ENCODE measurements at regions of chr11 and their contacts with region 1.

Region 1: DNA sequence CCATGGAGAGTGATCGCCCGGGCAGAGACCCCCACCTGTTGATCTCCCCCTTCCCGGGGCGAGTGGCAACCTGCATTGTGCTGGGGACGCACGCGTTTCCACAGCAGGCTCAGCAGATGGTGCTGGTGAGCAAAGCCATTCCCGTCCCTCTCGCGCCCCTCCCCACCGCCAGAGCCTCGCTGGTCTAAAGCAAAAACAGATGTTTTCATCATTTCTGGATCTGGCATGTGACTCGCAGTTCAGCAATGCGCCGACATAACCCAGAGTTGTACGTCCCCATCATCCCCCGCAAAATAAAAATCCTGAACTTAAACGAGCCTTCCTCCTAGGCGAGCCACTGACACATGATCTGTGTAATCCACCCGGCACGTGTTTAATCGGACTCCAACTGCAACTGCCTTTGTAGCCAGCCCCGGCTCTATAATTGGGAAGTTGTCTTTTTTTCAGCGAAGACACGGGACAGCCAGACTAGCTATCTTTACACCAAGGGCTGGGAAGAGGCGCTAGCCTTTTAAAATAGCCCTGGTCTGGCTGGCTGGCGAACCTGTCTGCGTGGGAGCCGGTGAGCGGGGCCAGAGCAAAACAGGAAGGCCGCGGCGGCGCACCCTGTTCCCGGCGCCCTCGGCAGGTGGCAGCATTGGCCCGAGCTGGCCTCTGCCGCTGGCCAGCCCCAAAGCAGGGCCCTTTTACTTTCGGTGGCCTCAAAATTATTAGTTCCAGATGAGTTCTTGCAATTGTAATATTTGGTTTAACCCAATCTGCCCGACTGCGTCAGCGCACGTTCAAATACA is 203.0 kb upstream of the SORL1-AS1 start:
- DNase-seq: peak; percentile 87
- H3K4me3 ChIP-seq: peak overlapping the region; percentile 6 to 68 (median 39)
- H3K27ac ChIP-seq: peak overlapping the region; percentile 69
- H3K4me1 ChIP-seq: peaks cover 2% of the 10 kb centered on the region
- H3K27me3 ChIP-seq: peaks cover 5 to 11% of the 10 kb centered on the region in 2 experiments
- CTCF ChIP-seq: peak; percentile 84 to 98
- POLR2A ChIP-seq: no peak

Region 2: DNA sequence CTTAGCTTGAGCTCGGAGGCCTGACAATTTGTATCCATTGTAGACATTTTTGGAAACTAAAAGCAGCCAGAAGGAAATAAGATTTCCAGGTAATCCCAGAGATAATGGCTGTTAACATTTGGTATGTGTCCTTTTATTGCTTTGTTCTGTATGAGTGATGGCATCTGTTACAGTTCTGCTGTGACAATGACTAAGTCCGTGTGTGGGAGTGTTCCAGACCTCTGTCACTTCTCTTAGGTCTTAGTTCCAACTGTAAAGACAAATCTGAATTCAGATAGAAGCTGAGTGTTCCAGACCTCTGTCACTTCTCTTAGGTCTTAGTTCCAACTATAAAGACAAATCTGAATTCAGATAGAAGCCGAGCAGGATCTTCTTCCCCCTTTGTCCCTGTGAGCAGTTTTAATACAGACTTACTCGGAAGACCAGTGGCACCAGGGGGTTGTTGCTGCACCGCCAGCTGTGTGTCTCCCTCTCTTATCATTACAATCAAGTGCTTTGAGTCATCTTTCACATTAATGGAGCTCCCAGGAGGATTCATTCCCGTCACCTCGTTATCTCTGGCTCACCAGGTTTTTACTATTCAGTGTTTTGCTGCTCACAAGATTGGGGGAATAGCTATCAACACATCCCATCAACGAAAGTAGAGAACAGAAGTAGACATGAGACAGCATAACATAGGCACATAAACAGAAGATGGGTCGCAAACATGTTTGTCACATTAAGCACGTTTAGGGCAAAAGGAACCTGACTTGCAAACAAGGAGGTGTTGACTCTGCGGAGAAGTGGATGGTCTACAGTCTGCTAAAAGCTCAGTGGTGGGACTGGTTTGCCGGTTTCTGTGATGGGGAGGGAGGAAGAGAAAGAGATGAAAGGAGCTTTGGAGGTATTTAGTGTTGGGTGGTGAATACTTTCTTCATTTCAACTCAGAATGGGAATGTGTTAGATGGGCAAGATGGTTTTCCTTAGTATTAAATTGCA is 11.9 kb before region 1 on chr11:
- CTCF ChIA-PET with region 1: interaction called, 13 read pairs
- POLR2A ChIA-PET with region 1: no interaction called
- dilution Hi-C with region 1: no loop called
- intact Hi-C with region 1: no loop called
- DNase-seq: no peak
- H3K4me3 ChIP-seq: no peak overlapping the region
- H3K27ac ChIP-seq: no peak overlapping the region
- H3K4me1 ChIP-seq: no peaks in the 10 kb centered on the region
- H3K27me3 ChIP-seq: peaks cover 15 to 20% of the 10 kb centered on the region in 2 experiments
- CTCF ChIP-seq: no peak
- POLR2A ChIP-seq: no peak

Region 3: GRCh38 chr11:121754598-121754997 is 98.9 kb after region 1 on chr11:
- CTCF ChIA-PET with region 1: no interaction called
- POLR2A ChIA-PET with region 1: no interaction called
- dilution Hi-C with region 1: no loop called
- intact Hi-C with region 1: no loop called
- DNase-seq: no peak
- H3K4me3 ChIP-seq: no peak overlapping the region
- H3K27ac ChIP-seq: no peak overlapping the region
- H3K4me1 ChIP-seq: no peaks in the 10 kb centered on the region
- H3K27me3 ChIP-seq: no peaks in the 10 kb centered on the region
- CTCF ChIP-seq: no peak
- POLR2A ChIP-seq: no peak

Region 4: DNA sequence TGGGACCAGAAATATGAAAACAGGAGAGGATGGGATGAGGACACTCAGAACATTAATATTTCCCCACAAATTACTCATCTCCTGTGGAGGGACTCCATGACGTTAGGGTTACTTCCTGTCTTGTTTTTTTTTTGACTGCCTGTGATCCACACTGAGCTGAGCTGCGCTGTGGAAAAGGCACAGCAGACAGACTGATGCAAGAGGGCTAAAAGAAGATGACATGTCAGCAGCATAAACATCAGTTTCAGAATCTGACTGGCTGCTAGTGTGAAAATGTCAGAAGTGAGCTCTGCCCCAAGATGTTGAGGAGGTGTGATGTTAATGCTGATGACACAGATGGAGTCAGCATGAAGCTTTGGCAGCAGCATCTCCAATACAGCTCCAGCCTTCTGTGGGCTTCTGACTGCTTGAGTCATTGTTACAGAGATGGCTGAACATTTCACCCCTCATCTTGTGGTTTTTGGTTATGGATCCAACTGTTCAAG is 173.5 kb after region 1 on chr11:
- CTCF ChIA-PET with region 1: no interaction called
- POLR2A ChIA-PET with region 1: interaction called, 4 read pairs
- dilution Hi-C with region 1: no loop called
- intact Hi-C with region 1: loop called (anchors 5 kb)
- DNase-seq: peak; percentile 87
- H3K4me3 ChIP-seq: no peak overlapping the region
- H3K27ac ChIP-seq: peak overlapping the region; percentile 81
- H3K4me1 ChIP-seq: peaks cover 26% of the 10 kb centered on the region
- H3K27me3 ChIP-seq: no peaks in the 10 kb centered on the region
- CTCF ChIP-seq: no peak
- POLR2A ChIP-seq: peak; percentile 49

Region 5: GRCh38 chr11:121964591-121964990 is 308.9 kb after region 1 on chr11:
- CTCF ChIA-PET with region 1: no interaction called
- POLR2A ChIA-PET with region 1: no interaction called
- dilution Hi-C with region 1: no loop called
- intact Hi-C with region 1: loop called (anchors 2 kb)
- DNase-seq: peak; percentile 15
- H3K4me3 ChIP-seq: no peak overlapping the region
- H3K27ac ChIP-seq: no peak overlapping the region
- H3K4me1 ChIP-seq: peaks cover 9% of the 10 kb centered on the region
- H3K27me3 ChIP-seq: peaks cover 2% of the 10 kb centered on the region in 2 experiments
- CTCF ChIP-seq: no peak
- POLR2A ChIP-seq: no peak

Region 6: GRCh38 chr11:122159173-122159721 is 503.5 kb after region 1 on chr11:
- CTCF ChIA-PET with region 1: no interaction called
- POLR2A ChIA-PET with region 1: no interaction called
- dilution Hi-C with region 1: no loop called
- intact Hi-C with region 1: loop called (anchors 1 kb)
- DNase-seq: peak; percentile 29
- H3K4me3 ChIP-seq: no peak overlapping the region
- H3K27ac ChIP-seq: peak overlapping the region; percentile 82
- H3K4me1 ChIP-seq: peaks cover 68% of the 10 kb centered on the region
- H3K27me3 ChIP-seq: no peaks in the 10 kb centered on the region
- CTCF ChIP-seq: no peak
- POLR2A ChIP-seq: no peak

Region 7: GRCh38 chr11:122505304-122506006 is 849.7 kb after region 1 on chr11:
- CTCF ChIA-PET with region 1: interaction called, 106 read pairs
- POLR2A ChIA-PET with region 1: no interaction called
- dilution Hi-C with region 1: no loop called
- intact Hi-C with region 1: loop called (anchors 1 kb)
- DNase-seq: peak; percentile 77
- H3K4me3 ChIP-seq: no peak overlapping the region
- H3K27ac ChIP-seq: no peak overlapping the region
- H3K4me1 ChIP-seq: no peaks in the 10 kb centered on the region
- H3K27me3 ChIP-seq: peaks cover 2 to 6% of the 10 kb centered on the region in 2 experiments
- CTCF ChIP-seq: peak; percentile 83 to 84
- POLR2A ChIP-seq: no peak